ENCODE measurements at regions of chr4 and their contacts with region 1.

Region 1: DNA sequence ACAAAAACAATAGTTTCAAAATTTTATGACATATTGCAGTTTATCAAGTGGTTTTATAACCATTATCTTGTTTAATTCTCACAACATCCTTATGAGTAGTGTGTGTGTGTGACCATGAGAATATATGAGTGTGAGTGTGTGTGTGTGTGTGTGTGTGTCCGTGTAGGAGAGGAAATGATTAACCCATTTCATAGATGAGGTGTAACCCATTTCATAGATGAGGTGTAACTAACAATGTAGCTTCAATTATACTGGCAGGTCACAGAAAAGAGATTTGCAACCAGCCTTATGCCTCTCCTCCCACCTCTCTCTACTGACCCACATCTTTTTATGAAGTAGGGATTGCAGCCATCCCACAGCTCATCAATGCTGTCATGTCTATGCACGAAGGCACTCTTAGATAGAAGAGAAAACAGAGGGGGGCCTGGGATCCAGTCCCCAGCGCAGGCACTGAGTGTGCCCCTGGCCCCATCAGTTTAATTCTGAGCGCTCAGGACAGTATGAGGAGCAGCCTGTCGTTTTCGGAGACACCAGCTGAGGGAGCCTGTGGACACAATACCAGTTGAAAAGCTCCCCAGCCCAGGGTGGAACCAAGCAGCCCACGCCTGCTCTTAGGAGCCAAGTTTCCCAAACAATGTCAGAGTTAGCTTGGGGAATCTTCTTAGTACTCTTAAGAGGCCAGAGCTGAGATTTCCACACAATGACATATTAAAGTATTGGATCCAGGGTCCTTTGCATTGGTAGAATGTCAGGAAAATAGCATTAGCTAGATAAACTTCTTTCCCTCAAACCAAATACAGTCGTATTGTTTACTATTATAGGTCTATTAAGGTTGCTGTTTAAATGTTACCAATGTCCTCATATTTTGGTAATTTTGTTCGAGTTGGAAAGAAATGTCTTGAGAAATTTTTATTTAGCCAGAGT is 88.6 kb downstream of the PALLD start:
- DNase-seq: peak; percentile 78
- ATAC-seq: peak; percentile 95

Region 2: GRCh38 chr4:168514249-168514852 is 71.1 kb before region 1 on chr4:
- intact Hi-C with region 1: loop called (anchors 5 kb)
- DNase-seq: no peak
- ATAC-seq: no peak

Region 3: DNA sequence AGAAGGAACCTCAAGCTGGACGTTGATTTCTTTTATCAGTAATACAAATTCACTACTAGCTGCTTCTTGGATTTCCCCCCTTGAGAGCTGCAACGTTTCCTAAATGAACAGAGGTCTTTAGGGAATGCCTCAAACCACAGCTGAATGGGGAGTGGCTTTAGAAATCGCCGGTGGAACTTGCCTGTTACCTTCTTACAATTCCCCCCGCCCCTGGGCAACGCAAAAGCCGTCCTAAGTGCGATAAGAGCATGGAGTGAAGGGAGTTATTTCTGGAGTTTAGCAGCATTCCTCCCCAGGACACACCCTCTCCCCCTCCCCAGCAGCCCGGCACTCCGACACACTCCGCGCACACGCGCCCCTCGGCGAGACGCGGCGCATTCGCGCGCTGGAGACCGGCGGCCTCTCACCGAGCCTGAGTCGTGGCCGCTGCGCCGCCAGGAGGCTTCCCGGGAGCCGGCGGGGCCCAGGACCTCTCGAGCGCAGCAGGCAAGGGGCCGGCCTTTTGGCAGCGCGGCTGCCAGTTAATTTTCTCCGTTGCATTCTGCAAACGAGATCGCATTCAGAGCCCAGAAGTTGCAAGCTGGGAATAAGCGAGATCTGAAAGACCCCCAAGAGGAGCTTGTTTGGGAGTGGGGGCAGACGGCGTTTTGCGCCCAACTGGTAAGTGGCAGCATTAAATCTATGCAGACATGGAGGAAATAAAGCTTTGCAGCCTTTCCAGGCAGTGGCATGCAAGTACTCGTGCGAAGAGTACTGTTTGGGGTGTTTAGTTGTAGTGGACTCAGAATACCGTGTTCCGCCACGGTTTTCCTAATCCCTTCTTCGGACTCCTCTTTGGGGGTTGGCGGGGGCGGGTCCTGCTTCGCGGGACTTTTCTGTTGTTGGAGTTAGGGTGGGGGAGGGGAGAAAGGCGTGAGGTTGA is 46.1 kb after region 1 on chr4:
- intact Hi-C with region 1: loop called (anchors 5 kb)
- DNase-seq: peak; percentile 77
- ATAC-seq: peak; percentile 90

Region 4: DNA sequence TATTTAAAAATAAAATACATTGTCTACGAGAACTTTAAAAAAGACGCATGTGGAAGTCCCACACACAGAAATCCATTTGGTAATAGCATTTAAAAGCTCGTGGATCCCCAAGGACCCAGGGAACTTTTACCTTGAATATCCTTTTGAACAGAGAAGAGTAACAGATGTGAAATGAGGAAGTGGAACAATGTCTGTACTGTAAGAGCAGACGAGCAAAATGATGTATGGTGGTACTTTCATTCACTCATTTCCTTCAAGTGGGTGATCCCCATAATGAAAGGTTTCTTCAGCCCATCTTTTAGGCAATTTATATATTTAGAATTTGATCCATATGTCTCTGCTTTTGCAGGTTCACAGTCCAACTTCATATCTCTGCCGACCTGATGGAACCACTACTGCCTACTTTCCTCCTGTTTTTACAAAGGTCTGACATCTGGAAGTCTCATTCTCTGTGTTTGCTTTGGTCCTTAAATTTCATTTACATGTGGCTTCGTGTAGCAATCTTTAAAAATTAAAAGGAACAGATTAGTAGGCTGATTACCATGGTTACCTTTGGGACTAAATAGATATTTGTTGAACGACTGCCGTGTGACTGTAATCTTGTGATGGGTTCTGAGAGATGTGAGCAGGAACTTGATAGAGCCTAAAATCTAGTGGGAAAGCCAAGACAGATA is 99.8 kb after region 1 on chr4:
- intact Hi-C with region 1: loop called (anchors 5 kb)
- DNase-seq: no peak
- ATAC-seq: no peak

Region 5: DNA sequence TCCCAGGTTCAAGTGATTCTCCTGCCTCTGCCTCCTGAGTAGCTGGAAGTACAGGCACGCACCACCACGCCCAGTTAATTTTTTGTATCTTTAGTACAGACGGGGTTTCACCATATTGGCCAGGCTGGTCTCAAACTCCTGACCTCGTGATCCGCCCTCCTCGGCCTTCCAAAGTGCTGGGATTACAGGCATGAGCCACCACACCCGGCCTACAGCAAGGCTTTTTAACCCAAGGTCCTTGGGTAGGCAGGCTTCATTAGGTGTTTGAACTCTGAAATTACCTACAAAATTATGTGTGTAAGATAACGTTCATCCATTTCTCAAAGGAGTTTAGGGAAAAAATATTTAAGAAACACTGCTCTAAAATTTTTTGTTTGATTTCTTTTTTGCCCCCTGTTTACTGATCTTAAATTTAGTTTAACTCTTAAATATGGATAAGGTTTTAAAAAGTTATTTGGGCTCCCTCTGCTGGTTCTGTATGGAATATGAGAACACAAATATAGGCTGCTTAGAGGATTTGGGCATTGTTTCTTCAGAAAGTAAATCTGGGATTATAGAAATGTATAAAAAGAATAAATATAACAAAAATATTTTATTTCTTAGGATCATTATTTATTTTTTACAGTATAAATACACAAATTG is 331.8 kb after region 1 on chr4:
- intact Hi-C with region 1: loop called (anchors 5 kb)
- DNase-seq: no peak
- ATAC-seq: no peak